Activated CD8-positive, alpha-beta T cell treated with anti-CD3 and anti-CD28 coated beads for 36 hours (primary cell): ENCODE measurements at regions of chr11 and their contacts with region 1.

Region 1: DNA sequence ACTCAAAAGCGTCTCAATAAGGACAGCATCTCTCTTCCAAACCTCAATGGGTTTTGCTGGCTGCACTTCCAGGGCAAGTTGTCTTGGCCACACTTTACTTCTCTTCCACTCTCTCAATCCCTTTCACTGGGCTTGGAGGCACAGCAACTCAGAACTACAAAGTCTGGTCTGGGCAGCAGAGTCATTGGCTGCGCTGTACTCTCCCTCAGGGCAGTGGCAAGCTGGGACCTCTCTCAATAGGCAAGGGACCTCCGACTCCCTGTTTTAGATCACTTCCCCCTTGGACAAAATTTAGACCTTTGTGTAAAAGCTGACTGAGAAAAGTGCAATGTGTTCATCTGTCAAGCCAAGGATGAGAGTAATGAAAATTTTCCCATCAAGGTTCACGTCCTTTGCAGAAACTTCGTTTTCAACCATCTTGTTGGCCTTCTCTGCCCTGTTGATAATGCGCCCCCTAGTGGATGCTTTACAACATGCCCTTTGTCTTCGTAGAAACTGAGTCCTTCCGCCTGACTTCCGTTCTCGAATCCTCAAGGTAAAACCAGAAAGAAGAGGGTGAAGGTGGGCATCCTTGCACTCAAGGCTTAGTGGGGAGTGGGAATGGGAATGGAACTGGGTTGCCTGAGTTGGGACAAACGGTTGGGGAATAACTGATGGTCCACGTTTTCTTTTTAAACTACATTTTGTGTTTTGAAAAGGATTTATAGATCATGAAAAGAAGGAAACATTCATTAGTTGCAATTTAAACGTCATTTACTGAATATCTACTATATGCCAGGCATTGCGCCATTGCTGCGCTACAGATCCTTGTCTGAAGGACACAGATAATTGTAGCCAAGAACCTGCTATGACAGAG is 99.1 kb downstream of the CD44 start:
- DNase-seq: peak; percentile 70
- ATAC-seq: no peak
- H3K4me3 Mint-ChIP-seq: no peak overlapping the region
- H3K27ac Mint-ChIP-seq: no peak overlapping the region
- H3K4me1 Mint-ChIP-seq: peaks cover 79% of the 10 kb centered on the region
- H3K27me3 Mint-ChIP-seq: no peaks in the 10 kb centered on the region
- CTCF ChIP-seq: peak; percentile 88

Region 2: GRCh38 chr11:35173011-35173511 is 65.0 kb before region 1 on chr11:
- CTCF ChIA-PET with region 1: interaction called, 5 read pairs
- POLR2A ChIA-PET with region 1: interaction called, 3 read pairs
- intact Hi-C with region 1: loop called (anchors 5 kb)
- DNase-seq: no peak
- ATAC-seq: no peak
- H3K4me3 Mint-ChIP-seq: no peak overlapping the region
- H3K27ac Mint-ChIP-seq: peak overlapping the region; percentile 84
- H3K4me1 Mint-ChIP-seq: peaks cover 94% of the 10 kb centered on the region
- H3K27me3 Mint-ChIP-seq: no peaks in the 10 kb centered on the region
- CTCF ChIP-seq: no peak

Region 3: DNA sequence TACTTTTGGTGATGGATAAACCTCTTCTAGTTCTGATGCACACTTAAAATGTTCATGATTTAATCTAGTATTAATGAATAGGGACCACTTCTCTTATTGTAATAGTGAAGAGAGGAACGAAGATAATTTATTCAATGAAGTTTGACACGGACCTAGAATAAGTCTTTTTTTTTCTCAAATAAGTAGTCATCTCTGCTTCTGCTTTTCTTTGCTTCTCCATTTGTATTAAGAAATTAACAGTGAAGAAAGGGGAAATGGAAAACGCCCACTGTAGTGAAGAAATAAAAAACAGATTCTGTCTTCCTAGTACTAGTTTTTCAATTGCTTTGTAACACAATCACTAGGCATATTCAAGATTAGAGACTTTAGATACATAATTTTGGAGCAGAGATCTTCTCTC is 26.1 kb before region 1 on chr11:
- CTCF ChIA-PET with region 1: no interaction called
- POLR2A ChIA-PET with region 1: no interaction called
- intact Hi-C with region 1: no loop called
- DNase-seq: no peak
- ATAC-seq: no peak
- H3K4me3 Mint-ChIP-seq: no peak overlapping the region
- H3K27ac Mint-ChIP-seq: peak overlapping the region; percentile 12
- H3K4me1 Mint-ChIP-seq: peaks cover 60% of the 10 kb centered on the region
- H3K27me3 Mint-ChIP-seq: no peaks in the 10 kb centered on the region
- CTCF ChIP-seq: no peak

Region 4: DNA sequence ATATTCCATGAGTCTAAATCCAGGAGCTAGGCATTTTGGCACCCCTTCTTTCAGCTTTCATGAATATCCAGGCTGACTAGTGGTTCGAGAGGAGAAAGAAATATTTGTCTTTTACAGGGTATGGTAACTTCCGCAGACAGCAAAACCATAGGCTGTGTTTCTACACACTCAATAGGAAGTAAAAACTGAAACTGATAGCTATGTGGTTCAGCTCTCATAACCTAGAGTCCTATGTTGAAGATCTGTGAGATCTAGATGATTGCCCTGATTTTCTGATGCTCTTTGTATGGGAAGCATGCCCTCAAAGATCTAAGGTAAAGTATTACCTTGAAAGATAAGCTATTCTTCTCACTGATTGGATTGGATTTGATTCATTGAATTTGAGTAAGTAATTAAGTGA is 19.2 kb after region 1 on chr11:
- CTCF ChIA-PET with region 1: interaction called, 19 read pairs
- POLR2A ChIA-PET with region 1: interaction called, 4 read pairs
- intact Hi-C with region 1: no loop called
- DNase-seq: no peak
- ATAC-seq: peak; percentile 98
- H3K4me3 Mint-ChIP-seq: no peak overlapping the region
- H3K27ac Mint-ChIP-seq: no peak overlapping the region
- H3K4me1 Mint-ChIP-seq: peaks cover 26% of the 10 kb centered on the region
- H3K27me3 Mint-ChIP-seq: peaks cover 2% of the 10 kb centered on the region
- CTCF ChIP-seq: no peak